Activated naive CD4-positive, alpha-beta T cell treated with anti-CD3 and anti-CD28 coated beads, Interleukin-2, amount 10 ng/mL, durations not matched to agents 7 days and 5 days (primary cell): ENCODE measurements at regions of chr12 and their contacts with region 1.

Region 1: DNA sequence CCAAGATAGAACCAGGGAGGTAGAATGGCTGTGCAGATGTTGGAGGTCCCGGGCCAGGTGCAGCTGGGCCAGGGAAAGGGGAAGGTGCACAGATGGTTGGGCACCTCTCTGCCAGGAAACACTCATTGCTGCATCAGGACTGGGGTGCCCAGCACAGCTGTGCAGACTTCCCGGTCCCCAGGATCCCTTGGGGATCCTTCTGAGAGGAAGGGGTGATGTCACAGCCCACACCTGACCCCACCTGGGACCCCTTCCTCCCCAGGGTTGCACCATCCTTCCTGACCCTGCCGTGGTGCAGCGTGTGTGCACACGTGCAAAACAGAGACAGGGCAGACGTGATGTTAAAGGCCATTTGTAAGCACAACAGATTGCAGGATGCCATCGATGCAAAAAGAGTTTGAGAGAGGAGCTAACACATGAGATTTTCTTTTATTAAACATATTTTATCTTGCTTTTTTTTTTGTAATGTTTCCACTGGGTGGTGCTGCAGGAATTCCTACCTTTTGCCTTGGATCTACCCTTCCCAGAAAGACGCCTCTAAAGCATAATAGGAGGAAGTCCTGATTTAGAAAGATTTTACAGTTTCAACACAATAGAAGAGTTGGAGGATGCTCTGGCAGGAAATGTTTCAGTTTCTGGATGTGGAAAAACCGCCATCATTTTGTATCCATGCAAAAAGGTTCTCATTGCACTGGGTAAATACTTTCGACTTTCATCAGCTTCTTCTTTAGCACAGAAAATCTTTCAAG is 14.8 kb downstream of the ELK3 start:
- DNase-seq: no peak
- H3K4me3 Mint-ChIP-seq: peak overlapping the region; percentile 72
- H3K27ac Mint-ChIP-seq: peak overlapping the region; percentile 84
- H3K4me1 Mint-ChIP-seq: peaks cover 98% of the 10 kb centered on the region
- H3K27me3 Mint-ChIP-seq: no peaks in the 10 kb centered on the region

Region 2: DNA sequence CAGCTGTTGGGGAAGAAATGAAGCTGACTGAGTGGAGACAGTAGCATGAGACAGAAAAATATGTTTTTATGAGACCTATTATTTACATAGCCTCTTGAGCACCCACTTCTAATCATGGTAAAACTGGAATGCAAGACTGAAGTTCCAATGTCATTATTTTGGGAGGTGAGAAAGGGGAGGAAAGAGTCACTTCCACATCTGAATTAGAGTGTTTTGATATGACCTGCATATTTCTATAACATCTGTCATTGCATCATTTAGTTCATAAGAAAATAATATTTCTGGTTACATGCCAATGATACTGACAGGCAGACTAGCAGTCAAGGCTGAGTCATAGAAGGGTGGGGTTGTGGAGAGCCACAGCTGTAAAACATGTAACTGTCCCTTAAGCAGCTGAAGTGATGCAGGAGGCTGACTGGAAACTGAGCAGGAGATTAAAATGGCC is 445.1 kb before region 1 on chr12:
- CTCF ChIA-PET with region 1: no interaction called
- DNase-seq: no peak
- H3K4me3 Mint-ChIP-seq: no peak overlapping the region
- H3K27ac Mint-ChIP-seq: no peak overlapping the region
- H3K4me1 Mint-ChIP-seq: no peaks in the 10 kb centered on the region
- H3K27me3 Mint-ChIP-seq: peaks cover 8% of the 10 kb centered on the region

Region 3: DNA sequence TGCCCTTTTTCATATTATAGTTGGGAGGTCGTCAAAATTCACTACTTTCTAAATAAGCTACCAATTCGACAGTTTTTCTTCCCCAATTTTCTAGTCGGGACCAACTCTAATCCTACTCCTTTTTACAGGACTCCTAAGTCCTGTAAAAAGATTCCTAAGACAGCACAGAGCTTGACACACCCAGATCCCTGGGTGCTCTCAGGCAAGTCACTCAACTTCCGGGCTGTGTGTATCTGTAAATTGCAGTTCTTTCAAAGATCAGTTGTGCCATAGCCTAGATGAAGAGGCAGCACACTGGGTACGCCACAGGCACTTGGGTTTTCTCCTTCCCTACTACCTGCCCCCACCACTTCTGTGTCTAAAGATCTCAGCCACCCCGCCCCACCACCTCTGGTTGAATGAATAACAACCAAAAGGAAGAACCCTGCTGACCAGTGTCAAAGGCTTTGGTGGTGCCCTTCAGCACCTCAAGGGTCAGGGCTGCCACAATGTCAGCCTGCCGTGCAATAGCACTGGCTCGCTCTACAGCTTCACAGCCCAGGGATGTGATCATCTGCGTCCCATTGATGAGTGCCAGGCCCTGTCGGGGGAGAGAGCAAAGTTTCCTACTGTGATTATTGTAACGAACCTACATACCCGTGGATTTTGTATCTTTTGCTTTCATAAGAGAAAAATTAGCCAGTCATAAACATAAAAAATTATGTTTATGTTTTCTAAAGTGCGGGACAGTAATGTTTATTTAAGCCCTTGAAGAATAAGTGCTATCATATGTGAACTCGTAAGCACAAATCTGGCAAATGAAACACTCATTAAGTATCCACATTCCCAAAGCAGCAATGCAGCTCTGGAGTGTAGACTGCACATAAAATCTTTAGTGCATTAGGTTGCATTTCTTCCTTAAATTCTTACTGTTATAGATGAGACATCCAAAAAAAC is 222.1 kb before region 1 on chr12:
- CTCF ChIA-PET with region 1: no interaction called
- DNase-seq: no peak
- H3K4me3 Mint-ChIP-seq: no peak overlapping the region
- H3K27ac Mint-ChIP-seq: no peak overlapping the region
- H3K4me1 Mint-ChIP-seq: no peaks in the 10 kb centered on the region
- H3K27me3 Mint-ChIP-seq: peaks cover 2% of the 10 kb centered on the region

Region 4: DNA sequence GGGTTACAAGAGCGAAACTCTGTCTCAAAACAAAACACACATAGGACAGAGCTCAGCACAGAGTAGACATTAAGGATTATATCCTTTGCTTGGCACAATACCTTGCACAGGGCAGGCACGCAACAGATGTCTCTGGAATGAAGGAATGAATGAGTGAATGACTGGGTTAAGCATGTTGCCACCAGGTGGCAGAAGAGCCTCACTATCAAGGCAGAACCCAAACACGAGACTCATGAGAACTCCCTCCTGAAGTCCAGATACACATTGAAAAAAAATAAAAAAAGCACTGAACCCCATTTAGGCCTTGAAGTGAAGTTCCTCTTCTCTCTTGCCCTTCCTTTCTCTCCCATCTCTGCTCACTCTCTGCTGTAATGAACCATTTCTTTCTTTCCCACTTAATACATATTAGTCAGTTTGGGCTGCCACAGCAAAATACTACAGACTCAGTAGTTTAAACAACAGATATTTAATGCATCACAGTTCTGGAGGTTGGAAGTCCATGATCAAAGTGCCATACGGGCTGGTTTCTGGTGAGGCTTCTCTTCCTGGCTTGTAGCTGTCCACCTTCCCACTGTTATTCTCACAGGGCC is 147.0 kb before region 1 on chr12:
- CTCF ChIA-PET with region 1: interaction called, 155 read pairs
- DNase-seq: peak; percentile 86
- H3K4me3 Mint-ChIP-seq: no peak overlapping the region
- H3K27ac Mint-ChIP-seq: no peak overlapping the region
- H3K4me1 Mint-ChIP-seq: peaks cover 30% of the 10 kb centered on the region
- H3K27me3 Mint-ChIP-seq: no peaks in the 10 kb centered on the region

Region 5: DNA sequence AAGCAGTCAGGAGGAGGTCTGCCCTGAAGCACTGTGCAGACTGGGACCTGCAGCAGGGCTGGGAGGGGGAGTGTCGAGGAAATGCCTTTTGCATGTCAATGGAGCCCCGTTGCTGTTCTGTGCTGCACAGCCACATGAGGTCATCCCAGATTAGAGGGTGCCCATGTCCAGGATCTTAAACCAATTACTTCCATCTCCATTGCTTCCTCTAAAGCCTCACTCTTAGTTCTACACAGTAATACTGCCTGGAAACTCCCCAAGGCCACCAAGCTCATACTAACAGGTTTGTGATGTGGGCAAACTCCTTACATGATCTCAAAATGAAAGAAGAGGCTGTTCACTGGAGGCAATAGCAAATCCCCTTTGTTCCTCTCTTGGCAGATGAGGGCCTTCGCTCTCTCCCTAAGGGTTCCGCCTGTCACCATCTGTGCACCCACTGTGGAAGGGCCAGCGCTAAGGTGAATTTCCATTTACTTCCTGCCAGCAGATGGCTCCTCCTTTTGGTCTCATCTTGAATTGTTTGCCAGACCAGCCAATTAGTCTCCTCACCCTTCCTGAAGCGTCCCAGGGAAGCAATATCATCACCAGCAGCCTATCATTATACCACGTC is 138.2 kb before region 1 on chr12:
- CTCF ChIA-PET with region 1: interaction called, 155 read pairs
- DNase-seq: no peak
- H3K4me3 Mint-ChIP-seq: no peak overlapping the region
- H3K27ac Mint-ChIP-seq: no peak overlapping the region
- H3K4me1 Mint-ChIP-seq: peaks cover 11% of the 10 kb centered on the region
- H3K27me3 Mint-ChIP-seq: peaks cover 17% of the 10 kb centered on the region

Region 6: DNA sequence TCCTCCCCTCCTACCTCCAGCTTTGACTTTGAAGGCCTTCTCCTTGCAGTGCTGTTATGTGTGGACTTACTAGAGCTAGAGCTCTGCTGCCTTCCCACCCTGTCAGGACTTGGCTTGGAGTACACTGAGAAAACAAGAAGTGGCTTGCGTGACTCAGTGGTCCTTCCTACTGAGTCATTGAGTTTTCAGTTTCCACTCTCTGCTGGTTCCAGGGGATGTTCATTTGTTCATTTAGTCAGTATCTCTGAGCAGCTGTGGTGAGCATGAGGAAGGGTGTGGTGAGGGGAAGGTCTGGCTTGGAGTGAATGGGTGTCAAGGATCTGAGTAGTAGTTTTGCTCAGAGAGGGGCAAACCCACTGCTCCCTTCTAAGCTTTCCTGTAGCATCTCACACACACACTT is 32.0 kb before region 1 on chr12:
- CTCF ChIA-PET with region 1: interaction called, 13 read pairs
- DNase-seq: peak; percentile 73
- H3K4me3 Mint-ChIP-seq: peak overlapping the region; percentile 1
- H3K27ac Mint-ChIP-seq: peak overlapping the region; percentile 95
- H3K4me1 Mint-ChIP-seq: peaks cover 36% of the 10 kb centered on the region
- H3K27me3 Mint-ChIP-seq: peaks cover 8% of the 10 kb centered on the region

Region 7: GRCh38 chr12:96233168-96233567 is 24.2 kb after region 1 on chr12:
- CTCF ChIA-PET with region 1: no interaction called
- DNase-seq: no peak
- H3K4me3 Mint-ChIP-seq: no peak overlapping the region
- H3K27ac Mint-ChIP-seq: no peak overlapping the region
- H3K4me1 Mint-ChIP-seq: peaks cover 36% of the 10 kb centered on the region
- H3K27me3 Mint-ChIP-seq: no peaks in the 10 kb centered on the region